ENCODE measurements at regions of chr10 and their contacts with region 1.

Region 1: GRCh38 chr10:4725917-4726606 is 99.9 kb upstream of the AKR1E2 start:
- DNase-seq: peak; percentile 93
- H3K4me3 ChIP-seq: no peak overlapping the region
- H3K27ac ChIP-seq: peak overlapping the region; percentile 96
- H3K4me1 ChIP-seq: peaks cover 15% of the 10 kb centered on the region
- H3K27me3 ChIP-seq: no peaks in the 10 kb centered on the region
- CTCF ChIP-seq: no peak
- POLR2A ChIP-seq: no peak

Region 2: GRCh38 chr10:4663162-4663904 is 62.7 kb before region 1 on chr10:
- CTCF ChIA-PET with region 1: interaction called, 4 read pairs
- POLR2A ChIA-PET with region 1: no interaction called
- dilution Hi-C with region 1: no loop called
- intact Hi-C with region 1: loop called (anchors 2 kb)
- DNase-seq: peak; percentile 97
- H3K4me3 ChIP-seq: no peak overlapping the region
- H3K27ac ChIP-seq: peak overlapping the region; percentile 97
- H3K4me1 ChIP-seq: peaks cover 23% of the 10 kb centered on the region
- H3K27me3 ChIP-seq: no peaks in the 10 kb centered on the region
- CTCF ChIP-seq: no peak
- POLR2A ChIP-seq: peak; percentile 65

Region 3: DNA sequence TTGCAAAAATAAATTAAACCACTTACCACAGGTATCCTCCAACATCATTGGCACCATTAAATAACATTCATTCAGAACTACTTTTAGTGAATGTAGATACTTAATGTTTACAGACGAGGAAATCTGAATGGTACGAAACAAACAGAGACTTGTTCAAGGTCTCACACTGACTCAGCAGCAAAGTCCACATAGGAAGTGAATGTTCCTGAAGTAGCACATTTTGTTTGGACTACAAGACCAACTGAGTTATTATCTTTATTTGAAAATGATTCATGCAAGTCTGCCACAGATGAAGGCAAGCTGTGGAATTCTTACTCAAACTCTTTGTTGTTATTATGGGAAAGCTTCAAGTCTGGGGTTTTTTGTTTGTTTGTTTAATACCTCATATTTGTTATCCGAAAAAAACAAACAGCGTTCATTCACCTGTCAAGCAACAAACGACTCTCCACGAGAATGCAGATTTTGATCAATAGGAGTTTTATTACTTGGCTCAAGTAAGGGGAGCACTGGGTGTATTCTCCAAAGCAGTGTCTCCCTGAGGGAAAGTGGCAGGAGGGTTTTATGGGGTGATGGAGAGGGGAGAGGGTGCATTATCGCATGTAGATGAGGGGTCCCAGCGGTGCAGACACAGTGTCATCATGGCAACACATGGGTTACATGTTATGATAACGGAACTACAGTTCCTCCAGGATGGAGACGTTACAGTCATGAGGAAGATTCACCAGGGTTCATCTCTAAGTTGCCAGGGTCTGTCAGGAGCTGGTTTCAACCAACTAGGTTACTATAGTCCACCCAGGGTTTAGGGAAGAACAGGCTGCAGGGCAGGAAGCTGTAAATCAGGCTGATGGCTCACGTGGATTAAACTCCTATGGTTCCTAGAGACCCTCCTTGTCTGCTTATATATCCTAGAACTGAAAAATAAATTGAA is 47.8 kb before region 1 on chr10:
- CTCF ChIA-PET with region 1: no interaction called
- POLR2A ChIA-PET with region 1: no interaction called
- dilution Hi-C with region 1: no loop called
- intact Hi-C with region 1: loop called (anchors 1 kb)
- DNase-seq: peak; percentile 94
- H3K4me3 ChIP-seq: peak overlapping the region; percentile 32 to 99 (median 71)
- H3K27ac ChIP-seq: peak overlapping the region; percentile 84
- H3K4me1 ChIP-seq: peaks cover 31% of the 10 kb centered on the region
- H3K27me3 ChIP-seq: no peaks in the 10 kb centered on the region
- CTCF ChIP-seq: no peak
- POLR2A ChIP-seq: no peak

Region 4: DNA sequence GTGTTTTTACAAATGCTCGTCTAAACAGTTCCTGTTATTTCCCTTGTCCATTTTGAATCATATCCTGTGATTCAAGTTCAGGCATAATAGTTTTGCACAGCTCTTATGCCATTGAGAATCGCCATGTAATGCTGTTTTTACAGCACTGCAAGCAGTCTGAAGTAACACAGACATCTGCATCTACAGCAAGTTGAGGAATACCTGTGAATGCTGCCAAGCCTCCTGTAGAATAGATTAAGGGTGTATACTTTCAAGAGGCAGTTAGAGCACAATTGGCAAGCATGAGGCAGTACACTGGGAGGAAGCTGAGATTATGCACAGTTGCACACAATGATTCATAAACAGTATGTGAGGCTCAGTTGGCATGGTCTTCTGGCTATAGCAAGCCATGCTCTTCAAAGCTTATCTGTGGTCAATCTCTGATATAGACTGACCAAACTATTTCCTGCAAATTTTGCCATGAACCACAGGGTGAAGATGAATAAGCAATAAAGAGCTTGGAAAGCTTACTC is 22.0 kb before region 1 on chr10:
- CTCF ChIA-PET with region 1: interaction called, 8 read pairs
- POLR2A ChIA-PET with region 1: interaction called, 5 read pairs
- dilution Hi-C with region 1: no loop called
- intact Hi-C with region 1: loop called (anchors 1 kb)
- DNase-seq: peak; percentile 98
- H3K4me3 ChIP-seq: no peak overlapping the region
- H3K27ac ChIP-seq: peak overlapping the region; percentile 92
- H3K4me1 ChIP-seq: peaks cover 45% of the 10 kb centered on the region
- H3K27me3 ChIP-seq: no peaks in the 10 kb centered on the region
- CTCF ChIP-seq: no peak
- POLR2A ChIP-seq: peak; percentile 13

Measured in endothelial cell of umbilical vein (primary cell).